ENCODE measurements at regions of chr13 and their contacts with region 1.

Region 1: DNA sequence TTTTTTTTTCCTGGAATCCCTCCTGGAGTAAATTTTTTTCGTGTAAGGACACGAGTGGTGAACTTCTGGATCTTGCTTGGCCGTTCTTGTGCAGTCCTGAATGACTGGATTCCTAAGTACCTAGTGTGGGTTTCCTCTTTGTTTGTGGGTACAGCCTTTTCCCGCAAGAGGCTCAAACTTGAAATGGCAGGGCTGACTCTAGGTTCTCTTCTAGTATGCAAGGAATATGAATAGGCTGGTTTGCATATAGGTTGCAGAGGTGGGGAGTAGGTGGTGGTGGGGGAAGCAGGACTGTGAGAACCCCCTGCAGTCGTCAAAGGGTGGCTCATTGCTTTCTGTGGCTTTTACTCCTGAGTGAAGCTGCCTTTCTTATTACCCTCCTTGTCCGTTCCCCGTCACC is 13.6 kb downstream of the UBAC2 start:
- DNase-seq: peak; percentile 78
- H3K4me3 Mint-ChIP-seq: peak overlapping the region; percentile 83
- H3K27ac Mint-ChIP-seq: peak overlapping the region; percentile 92
- H3K4me1 Mint-ChIP-seq: peaks cover 68% of the 10 kb centered on the region
- H3K27me3 Mint-ChIP-seq: no peaks in the 10 kb centered on the region

Region 2: GRCh38 chr13:99033814-99034213 is 180.4 kb before region 1 on chr13:
- intact Hi-C with region 1: loop called (anchors 5 kb)
- DNase-seq: no peak
- H3K4me3 Mint-ChIP-seq: no peak overlapping the region
- H3K27ac Mint-ChIP-seq: no peak overlapping the region
- H3K4me1 Mint-ChIP-seq: peaks cover 25% of the 10 kb centered on the region
- H3K27me3 Mint-ChIP-seq: no peaks in the 10 kb centered on the region

Region 3: DNA sequence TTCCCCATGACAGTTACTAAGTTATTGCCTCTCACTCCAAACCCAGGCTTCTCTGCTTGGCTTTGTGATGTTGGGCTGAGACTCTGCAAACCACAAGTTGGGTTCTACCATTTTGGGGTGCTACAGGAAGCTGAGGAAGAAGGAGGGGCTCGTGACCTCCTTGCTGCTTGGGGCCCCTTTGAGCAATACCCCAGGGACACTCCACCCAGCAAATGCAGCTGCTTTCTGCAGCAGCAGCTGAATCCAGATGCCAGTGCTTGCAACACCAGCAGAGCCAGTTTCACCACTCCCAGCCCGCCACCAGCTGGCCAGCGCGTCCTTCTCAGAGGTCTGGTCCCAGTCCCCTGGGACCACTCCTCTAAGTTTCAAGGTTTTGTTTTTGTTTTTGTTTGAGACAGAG is 35.6 kb before region 1 on chr13:
- intact Hi-C with region 1: no loop called
- DNase-seq: peak; percentile 65
- H3K4me3 Mint-ChIP-seq: no peak overlapping the region
- H3K27ac Mint-ChIP-seq: no peak overlapping the region
- H3K4me1 Mint-ChIP-seq: peaks cover 31% of the 10 kb centered on the region
- H3K27me3 Mint-ChIP-seq: peaks cover 7% of the 10 kb centered on the region

Region 4: GRCh38 chr13:99200432-99201167 is 13.6 kb before region 1 on chr13 and contains the start of gene UBAC2:
- intact Hi-C with region 1: loop called (anchors 1 kb)
- DNase-seq: peak; percentile 99
- H3K4me3 Mint-ChIP-seq: peak within 1 kb of the TSS; percentile 97
- H3K27ac Mint-ChIP-seq: peak within 1 kb of the TSS; percentile 97
- H3K4me1 Mint-ChIP-seq: peaks cover 46% of the 10 kb centered on the region
- H3K27me3 Mint-ChIP-seq: no peaks in the 10 kb centered on the region
- total RNA-seq, gene UBAC2: 52.6 and 52.8 TPM in 2 replicates

Region 5: DNA sequence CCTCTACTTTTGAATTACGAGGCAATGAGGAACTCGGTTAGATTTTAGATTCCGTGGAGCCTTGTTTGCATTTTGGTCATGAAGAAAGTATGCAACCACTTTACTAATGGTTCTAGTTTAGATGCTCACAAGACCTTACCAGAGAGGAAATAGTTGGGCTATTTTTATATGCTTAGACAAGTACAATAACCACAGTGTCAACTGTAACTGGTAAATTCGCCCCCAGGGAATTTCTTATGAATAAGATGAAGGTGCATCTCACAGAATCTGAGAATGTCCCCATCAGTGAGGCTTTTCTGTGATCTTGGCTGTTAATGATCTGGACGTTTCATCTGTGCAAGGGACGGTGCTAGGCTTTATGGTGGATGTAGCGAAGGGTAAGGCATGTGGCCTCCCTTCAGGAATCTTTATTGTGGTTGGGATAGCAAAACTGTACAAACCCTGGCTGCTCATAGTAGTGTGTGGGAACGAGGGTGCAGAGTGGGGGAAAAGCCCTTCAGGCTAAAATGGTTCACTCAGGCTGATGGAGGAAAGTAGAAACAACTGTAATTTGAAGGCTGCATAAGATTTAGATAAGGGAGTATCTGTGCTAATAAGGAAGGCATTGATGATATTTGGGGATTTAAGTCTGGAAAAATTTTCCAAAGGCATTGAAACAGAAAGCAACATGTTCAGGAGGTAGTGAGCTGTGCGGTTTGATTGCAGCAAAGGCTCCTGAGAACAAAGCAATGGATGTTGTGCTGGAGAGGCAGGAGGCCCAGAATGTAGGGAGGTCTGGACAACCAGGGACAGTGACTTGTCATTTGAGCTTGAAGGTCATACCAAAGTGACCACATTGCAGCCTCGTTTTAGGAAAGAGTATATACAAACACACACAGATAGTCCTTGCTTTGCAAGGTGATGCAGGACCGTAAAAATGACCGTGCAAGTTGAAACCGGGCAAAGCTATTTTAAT is 14.8 kb after region 1 on chr13:
- intact Hi-C with region 1: loop called (anchors 1 kb)
- DNase-seq: peak; percentile 65
- H3K4me3 Mint-ChIP-seq: peak overlapping the region; percentile 79
- H3K27ac Mint-ChIP-seq: peak overlapping the region; percentile 86
- H3K4me1 Mint-ChIP-seq: peaks cover 50% of the 10 kb centered on the region
- H3K27me3 Mint-ChIP-seq: no peaks in the 10 kb centered on the region

Region 6: DNA sequence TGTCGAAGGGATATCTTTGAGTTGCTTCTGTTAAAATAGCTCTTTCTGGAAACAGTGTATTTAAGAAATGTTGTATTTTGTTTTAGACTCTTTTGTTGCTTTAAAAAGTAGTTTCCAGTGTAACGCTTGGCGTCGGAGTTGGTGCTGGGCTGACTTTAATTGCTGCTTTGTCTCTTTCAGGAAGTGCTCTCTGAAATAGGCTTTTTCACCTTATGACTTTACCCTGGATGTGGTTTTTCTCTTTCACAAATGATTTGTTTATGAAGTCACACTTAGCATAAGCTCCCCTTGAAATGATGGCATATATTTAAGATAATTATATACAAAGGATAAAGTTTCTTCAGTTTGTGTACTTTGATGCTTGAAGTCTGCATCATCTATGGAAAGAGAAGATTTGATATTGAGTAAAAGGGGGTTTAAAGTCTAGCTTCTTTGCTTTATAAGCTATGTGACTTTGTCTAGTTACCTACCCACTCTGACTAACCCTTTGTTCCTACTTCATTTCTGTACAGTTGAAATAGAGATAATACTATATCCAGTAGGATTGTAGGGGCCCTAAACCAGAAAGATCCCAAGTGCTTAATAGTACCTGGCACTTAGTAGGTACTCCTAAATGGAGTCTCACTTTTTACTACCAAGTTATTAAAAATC is 44.1 kb after region 1 on chr13 and contains the start of gene GPR18:
- intact Hi-C with region 1: loop called (anchors 1 kb)
- DNase-seq: peak; percentile 80
- H3K4me3 Mint-ChIP-seq: peak within 1 kb of the TSS; percentile 92
- H3K27ac Mint-ChIP-seq: peak within 1 kb of the TSS; percentile 96
- H3K4me1 Mint-ChIP-seq: peaks cover 51% of the 10 kb centered on the region
- H3K27me3 Mint-ChIP-seq: no peaks in the 10 kb centered on the region
- total RNA-seq, gene GPR18: 5.9 and 6.3 TPM in 2 replicates

Region 7: DNA sequence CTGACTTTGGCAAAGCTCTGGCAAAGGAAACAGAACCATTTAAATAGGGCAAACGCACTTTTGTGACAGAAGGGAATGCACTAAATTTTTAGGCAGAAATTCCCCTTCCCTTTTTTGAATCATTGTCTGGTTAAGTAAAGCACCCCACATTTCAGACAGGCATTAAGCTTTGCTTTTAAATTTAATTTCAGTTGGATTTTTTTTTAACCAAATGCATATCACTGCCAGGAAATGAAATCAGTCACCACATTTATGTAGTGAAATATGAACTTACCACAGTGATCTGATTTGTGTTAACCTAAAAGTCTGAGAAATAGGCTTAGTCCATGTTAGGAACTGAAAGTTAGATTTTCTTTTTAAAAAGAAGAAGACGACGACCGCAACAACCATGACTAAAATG is 82.2 kb after region 1 on chr13:
- intact Hi-C with region 1: loop called (anchors 2 kb)
- DNase-seq: no peak
- H3K4me3 Mint-ChIP-seq: peak overlapping the region; percentile 68
- H3K27ac Mint-ChIP-seq: peak overlapping the region; percentile 79
- H3K4me1 Mint-ChIP-seq: peaks cover 58% of the 10 kb centered on the region
- H3K27me3 Mint-ChIP-seq: no peaks in the 10 kb centered on the region

Region 8: DNA sequence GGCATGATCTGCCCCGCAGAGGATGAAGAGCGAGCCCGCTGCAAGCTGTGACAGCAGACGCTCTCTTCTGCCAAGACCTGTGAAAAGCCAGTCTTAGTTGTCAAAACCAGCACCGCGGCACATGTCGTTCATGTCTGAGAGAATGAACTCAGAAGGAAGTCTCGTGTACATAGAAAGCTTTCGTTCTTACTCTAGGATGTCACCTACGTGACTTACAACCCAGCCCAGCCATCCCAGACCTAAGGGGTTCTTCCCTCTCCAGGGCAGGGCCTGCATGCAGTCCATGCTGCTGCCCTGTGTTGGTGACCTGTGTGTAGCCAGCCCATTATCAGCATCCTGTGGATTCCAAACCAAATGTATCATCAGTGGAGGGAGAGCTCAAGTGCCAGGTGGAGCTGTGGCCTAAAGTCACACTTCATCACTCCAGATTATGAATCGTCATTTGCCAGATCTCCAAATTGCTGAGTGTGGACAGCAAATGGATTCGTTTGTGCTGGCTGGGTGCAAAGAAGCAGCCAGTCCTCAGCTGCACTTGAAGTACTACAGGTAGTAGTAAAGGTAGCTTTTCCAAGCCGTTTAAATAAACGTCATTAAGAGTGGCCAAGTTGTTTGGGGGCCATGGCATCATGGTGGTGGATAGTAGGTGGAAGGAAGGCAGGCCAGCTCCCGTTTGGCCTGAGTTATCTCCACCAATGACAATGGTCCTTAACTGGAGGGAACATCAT is 166.9 kb after region 1 on chr13:
- intact Hi-C with region 1: loop called (anchors 5 kb)
- DNase-seq: peak; percentile 88
- H3K4me3 Mint-ChIP-seq: peak overlapping the region; percentile 56
- H3K27ac Mint-ChIP-seq: peak overlapping the region; percentile 88
- H3K4me1 Mint-ChIP-seq: peaks cover 65% of the 10 kb centered on the region
- H3K27me3 Mint-ChIP-seq: no peaks in the 10 kb centered on the region

Region 9: GRCh38 chr13:99446242-99446641 is 232.0 kb after region 1 on chr13:
- intact Hi-C with region 1: no loop called
- DNase-seq: no peak
- H3K4me3 Mint-ChIP-seq: no peak overlapping the region
- H3K27ac Mint-ChIP-seq: no peak overlapping the region
- H3K4me1 Mint-ChIP-seq: no peaks in the 10 kb centered on the region
- H3K27me3 Mint-ChIP-seq: peaks cover 16% of the 10 kb centered on the region

Region 10: GRCh38 chr13:100069278-100069677 is 855.0 kb after region 1 on chr13:
- intact Hi-C with region 1: no loop called
- DNase-seq: no peak
- H3K4me3 Mint-ChIP-seq: no peak overlapping the region
- H3K27ac Mint-ChIP-seq: no peak overlapping the region
- H3K4me1 Mint-ChIP-seq: no peaks in the 10 kb centered on the region
- H3K27me3 Mint-ChIP-seq: peaks cover 9% of the 10 kb centered on the region

Measured in activated CD4-positive, alpha-beta T cell treated with anti-CD3 and anti-CD28 coated beads, Interleukin-2, amount 10 ng/mL, durations not matched to agents 24 days and 14 days (primary cell).